ENCODE measurements at regions of chr22 and their contacts with region 1.

Region 1: GRCh38 chr22:17742527-17742902 is 31.8 kb downstream of the BID start:
- DNase-seq: peak; percentile 87
- H3K4me3 ChIP-seq: no peak overlapping the region
- H3K27ac ChIP-seq: no peak overlapping the region
- H3K4me1 ChIP-seq: peaks cover 15% of the 10 kb centered on the region
- CTCF ChIP-seq: peak; percentile 81

Region 2: DNA sequence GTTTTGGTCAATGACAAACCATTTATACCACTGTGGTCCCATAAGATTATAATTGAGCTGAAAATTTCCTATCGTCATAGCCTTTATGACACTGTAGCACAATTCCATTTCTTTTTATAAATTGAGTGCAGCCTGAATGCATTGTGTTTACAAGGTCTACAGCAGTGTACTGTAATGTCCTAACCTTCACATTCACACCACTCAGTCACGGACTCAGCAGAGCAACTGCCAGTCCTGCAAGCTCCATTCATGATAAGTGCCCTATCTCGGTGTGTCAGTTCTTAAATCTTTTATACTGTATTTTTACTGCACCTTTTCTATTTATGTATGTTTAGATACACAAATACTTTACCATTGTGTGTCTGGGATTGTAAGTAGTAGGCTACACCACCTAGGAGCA is 234.4 kb before region 1 on chr22:
- CTCF ChIA-PET with region 1: no interaction called
- POLR2A ChIA-PET with region 1: no interaction called
- intact Hi-C with region 1: no loop called
- DNase-seq: no peak
- H3K4me3 ChIP-seq: no peak overlapping the region
- H3K27ac ChIP-seq: no peak overlapping the region
- H3K4me1 ChIP-seq: no peaks in the 10 kb centered on the region
- CTCF ChIP-seq: no peak

Region 3: GRCh38 chr22:17562906-17563870 is 179.3 kb before region 1 on chr22 and contains the start of gene SLC25A18:
- CTCF ChIA-PET with region 1: no interaction called
- POLR2A ChIA-PET with region 1: no interaction called
- intact Hi-C with region 1: loop called (anchors 1 kb)
- DNase-seq: no peak
- H3K4me3 ChIP-seq: no peak within 1 kb of the TSS
- H3K27ac ChIP-seq: no peak within 1 kb of the TSS
- H3K4me1 ChIP-seq: peaks cover 30% of the 10 kb centered on the region
- CTCF ChIP-seq: 0 out of 2 replicates have a peak, but pooled peaks have one; percentile 21
- total RNA-seq, gene SLC25A18: not detected in 2 replicates

Region 4: GRCh38 chr22:17773606-17774205 is 31.2 kb after region 1 on chr22:
- CTCF ChIA-PET with region 1: interaction called, 6 read pairs
- POLR2A ChIA-PET with region 1: interaction called, 7 read pairs
- intact Hi-C with region 1: loop called (anchors 1 kb)
- DNase-seq: peak; percentile 79
- H3K4me3 ChIP-seq: peak overlapping the region; percentile 75
- H3K27ac ChIP-seq: peak overlapping the region; percentile 79
- H3K4me1 ChIP-seq: peaks cover 56% of the 10 kb centered on the region
- CTCF ChIP-seq: no peak

Region 5: GRCh38 chr22:17785185-17786184 is 43.0 kb after region 1 on chr22:
- CTCF ChIA-PET with region 1: interaction called, 4 read pairs
- POLR2A ChIA-PET with region 1: interaction called, 3 read pairs
- intact Hi-C with region 1: loop called (anchors 1 kb)
- DNase-seq: peak; percentile 79
- H3K4me3 ChIP-seq: no peak overlapping the region
- H3K27ac ChIP-seq: peak overlapping the region; percentile 19
- H3K4me1 ChIP-seq: peaks cover 22% of the 10 kb centered on the region
- CTCF ChIP-seq: peak; percentile 82

Region 6: DNA sequence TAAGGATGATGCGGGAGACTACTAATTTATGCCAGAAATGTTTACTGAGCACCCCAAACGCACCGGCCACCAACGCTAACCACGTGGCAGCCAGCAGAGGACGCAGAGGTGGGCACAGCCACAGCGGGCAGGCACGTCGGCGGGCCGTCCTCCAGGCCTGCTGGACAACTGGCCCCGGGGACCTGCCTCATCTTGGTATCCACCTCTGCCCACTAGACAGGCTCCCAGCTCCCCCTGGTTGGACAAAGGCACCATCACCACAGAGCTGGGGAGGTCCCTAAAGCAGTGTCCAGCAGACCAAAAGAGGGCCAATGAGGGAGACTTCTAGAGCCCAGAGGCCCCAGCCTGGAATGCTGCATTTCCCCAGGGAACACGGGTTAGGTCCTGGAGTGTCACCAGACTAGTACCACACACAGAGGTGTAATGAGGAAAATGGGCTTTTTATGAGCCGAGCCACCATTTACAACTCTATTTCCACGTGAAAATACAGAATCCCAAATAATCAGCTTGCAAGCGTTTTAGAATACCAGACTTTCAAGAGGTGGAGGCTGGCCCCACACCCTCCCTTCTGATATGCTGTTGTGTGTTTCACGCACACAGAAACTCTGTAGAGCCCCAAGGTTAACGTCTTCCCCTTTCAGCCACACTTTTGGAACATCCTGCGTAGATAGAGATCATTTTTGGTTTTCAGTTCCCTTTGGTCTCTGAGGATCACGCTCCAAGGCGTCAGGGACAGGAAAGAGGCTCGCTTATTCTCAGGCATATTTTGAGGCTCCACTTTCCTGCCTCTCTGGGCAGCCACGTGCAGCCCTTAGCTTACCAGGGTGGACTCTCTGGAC is 55.4 kb after region 1 on chr22:
- CTCF ChIA-PET with region 1: interaction called, 3 read pairs
- POLR2A ChIA-PET with region 1: no interaction called
- intact Hi-C with region 1: loop called (anchors 1 kb)
- DNase-seq: peak; percentile 86
- H3K4me3 ChIP-seq: peak overlapping the region; percentile 63
- H3K27ac ChIP-seq: peak overlapping the region; percentile 96
- H3K4me1 ChIP-seq: peaks cover 85% of the 10 kb centered on the region
- CTCF ChIP-seq: no peak

Region 7: DNA sequence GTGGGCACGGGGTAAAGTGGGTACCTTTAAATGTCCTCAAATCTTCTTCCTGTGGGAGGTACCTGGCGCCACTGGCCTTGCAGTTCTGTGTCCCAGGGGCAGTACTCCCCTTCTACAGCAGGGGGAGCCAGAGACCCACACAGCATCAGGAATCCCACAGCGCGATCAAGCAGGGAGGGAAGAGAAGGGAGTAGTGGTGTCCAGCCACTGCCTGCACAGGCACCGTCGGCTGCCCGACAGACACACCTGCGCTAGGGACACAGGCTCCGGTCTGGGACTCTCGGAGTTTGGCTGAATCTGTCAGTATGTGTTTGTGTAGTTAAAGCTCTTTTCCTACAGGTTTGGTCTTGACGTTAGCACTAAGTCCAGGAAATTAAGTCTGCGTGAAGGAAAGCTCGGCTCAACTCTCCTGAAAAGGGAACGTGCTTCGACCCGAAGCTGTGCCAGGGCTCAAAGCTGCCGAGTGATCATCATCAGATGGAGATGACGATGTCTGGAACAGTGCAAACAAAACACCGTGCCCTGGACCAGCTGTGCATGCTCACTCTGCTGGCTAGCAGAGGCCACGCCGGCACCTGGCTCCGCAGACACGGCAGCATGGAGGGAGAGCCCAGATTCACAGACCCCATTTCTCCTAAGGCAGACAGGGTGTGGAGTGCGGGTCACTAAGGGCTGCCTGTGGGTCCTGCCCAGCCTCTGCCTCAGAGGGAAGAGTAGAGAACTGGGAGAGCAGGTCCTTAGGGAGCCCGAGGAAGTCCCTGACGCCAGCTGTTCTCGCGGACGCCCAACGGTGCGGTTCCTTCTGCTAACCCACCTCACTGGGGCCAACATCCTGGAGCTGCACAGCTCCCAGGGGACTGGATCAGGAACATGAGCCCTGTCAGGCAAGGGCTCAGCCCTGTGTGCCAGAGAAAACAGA is 87.8 kb after region 1 on chr22:
- CTCF ChIA-PET with region 1: no interaction called
- POLR2A ChIA-PET with region 1: no interaction called
- intact Hi-C with region 1: loop called (anchors 1 kb)
- DNase-seq: peak; percentile 80
- H3K4me3 ChIP-seq: no peak overlapping the region
- H3K27ac ChIP-seq: no peak overlapping the region
- H3K4me1 ChIP-seq: no peaks in the 10 kb centered on the region
- CTCF ChIP-seq: peak; percentile 94

Region 8: GRCh38 chr22:17910561-17911311 is 168.2 kb after region 1 on chr22:
- CTCF ChIA-PET with region 1: no interaction called
- POLR2A ChIA-PET with region 1: no interaction called
- intact Hi-C with region 1: no loop called
- DNase-seq: no peak
- H3K4me3 ChIP-seq: no peak overlapping the region
- H3K27ac ChIP-seq: no peak overlapping the region
- H3K4me1 ChIP-seq: peaks cover 6% of the 10 kb centered on the region
- CTCF ChIP-seq: no peak